Activated CD8-positive, alpha-beta T cell treated with anti-CD3 and anti-CD28 coated beads for 36 hours (primary cell): ENCODE measurements at regions of chr1 and their contacts with region 1.

Region 1: DNA sequence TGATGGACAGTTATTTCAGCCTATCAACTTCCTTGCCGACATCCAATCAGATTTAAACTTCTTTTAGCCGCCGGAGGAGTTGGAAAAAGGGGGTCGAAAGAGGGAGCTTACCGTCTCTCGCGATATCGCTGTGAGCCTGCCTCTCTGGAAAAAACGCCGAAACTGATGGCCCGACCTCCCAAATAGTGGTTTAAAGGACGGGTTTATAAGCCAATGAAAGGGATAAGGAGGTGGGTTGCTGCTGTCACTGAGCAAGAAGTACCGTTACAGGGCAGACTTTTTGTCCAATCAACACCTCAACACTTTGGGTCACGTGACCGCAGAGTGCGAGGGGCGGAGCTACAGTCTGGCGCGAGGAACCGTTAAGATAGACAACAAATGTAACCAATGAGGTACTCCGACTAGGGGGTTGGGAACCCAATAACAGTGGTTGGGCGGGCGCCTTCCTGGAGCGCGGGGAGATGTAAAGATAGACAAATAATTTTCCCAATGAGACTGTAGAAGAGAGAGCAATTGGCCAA is at the start of gene RBM15:
- DNase-seq: peak; percentile 98
- ATAC-seq: peak; percentile 80
- H3K4me3 Mint-ChIP-seq: no peak within 1 kb of the TSS
- H3K27ac Mint-ChIP-seq: no peak within 1 kb of the TSS
- H3K4me1 Mint-ChIP-seq: peaks cover 49% of the 10 kb centered on the region
- H3K27me3 Mint-ChIP-seq: no peaks in the 10 kb centered on the region
- CTCF ChIP-seq: no peak
- total RNA-seq, gene RBM15: 70.8 to 72.5 TPM

Region 2: GRCh38 chr1:110196917-110197765 is 141.8 kb before region 1 on chr1:
- CTCF ChIA-PET with region 1: interaction called, 44 read pairs
- POLR2A ChIA-PET with region 1: no interaction called
- intact Hi-C with region 1: no loop called
- DNase-seq: peak; percentile 61
- ATAC-seq: peak; percentile 100
- H3K4me3 Mint-ChIP-seq: no peak overlapping the region
- H3K27ac Mint-ChIP-seq: no peak overlapping the region
- H3K4me1 Mint-ChIP-seq: no peaks in the 10 kb centered on the region
- H3K27me3 Mint-ChIP-seq: no peaks in the 10 kb centered on the region
- CTCF ChIP-seq: peak; percentile 88

Region 3: GRCh38 chr1:110203021-110203661 is 135.8 kb before region 1 on chr1:
- CTCF ChIA-PET with region 1: interaction called, 153 read pairs
- POLR2A ChIA-PET with region 1: interaction called, 64 read pairs
- intact Hi-C with region 1: no loop called
- DNase-seq: peak; percentile 84
- ATAC-seq: peak; percentile 75
- H3K4me3 Mint-ChIP-seq: no peak overlapping the region
- H3K27ac Mint-ChIP-seq: peak overlapping the region; percentile 91
- H3K4me1 Mint-ChIP-seq: peaks cover 21% of the 10 kb centered on the region
- H3K27me3 Mint-ChIP-seq: no peaks in the 10 kb centered on the region
- CTCF ChIP-seq: peak; percentile 78

Region 4: GRCh38 chr1:110356405-110356804 is 17.5 kb after region 1 on chr1:
- CTCF ChIA-PET with region 1: no interaction called
- POLR2A ChIA-PET with region 1: interaction called, 47 read pairs
- intact Hi-C with region 1: no loop called
- DNase-seq: no peak
- ATAC-seq: no peak
- H3K4me3 Mint-ChIP-seq: no peak overlapping the region
- H3K27ac Mint-ChIP-seq: no peak overlapping the region
- H3K4me1 Mint-ChIP-seq: peaks cover 37% of the 10 kb centered on the region
- H3K27me3 Mint-ChIP-seq: no peaks in the 10 kb centered on the region
- CTCF ChIP-seq: no peak

Region 5: DNA sequence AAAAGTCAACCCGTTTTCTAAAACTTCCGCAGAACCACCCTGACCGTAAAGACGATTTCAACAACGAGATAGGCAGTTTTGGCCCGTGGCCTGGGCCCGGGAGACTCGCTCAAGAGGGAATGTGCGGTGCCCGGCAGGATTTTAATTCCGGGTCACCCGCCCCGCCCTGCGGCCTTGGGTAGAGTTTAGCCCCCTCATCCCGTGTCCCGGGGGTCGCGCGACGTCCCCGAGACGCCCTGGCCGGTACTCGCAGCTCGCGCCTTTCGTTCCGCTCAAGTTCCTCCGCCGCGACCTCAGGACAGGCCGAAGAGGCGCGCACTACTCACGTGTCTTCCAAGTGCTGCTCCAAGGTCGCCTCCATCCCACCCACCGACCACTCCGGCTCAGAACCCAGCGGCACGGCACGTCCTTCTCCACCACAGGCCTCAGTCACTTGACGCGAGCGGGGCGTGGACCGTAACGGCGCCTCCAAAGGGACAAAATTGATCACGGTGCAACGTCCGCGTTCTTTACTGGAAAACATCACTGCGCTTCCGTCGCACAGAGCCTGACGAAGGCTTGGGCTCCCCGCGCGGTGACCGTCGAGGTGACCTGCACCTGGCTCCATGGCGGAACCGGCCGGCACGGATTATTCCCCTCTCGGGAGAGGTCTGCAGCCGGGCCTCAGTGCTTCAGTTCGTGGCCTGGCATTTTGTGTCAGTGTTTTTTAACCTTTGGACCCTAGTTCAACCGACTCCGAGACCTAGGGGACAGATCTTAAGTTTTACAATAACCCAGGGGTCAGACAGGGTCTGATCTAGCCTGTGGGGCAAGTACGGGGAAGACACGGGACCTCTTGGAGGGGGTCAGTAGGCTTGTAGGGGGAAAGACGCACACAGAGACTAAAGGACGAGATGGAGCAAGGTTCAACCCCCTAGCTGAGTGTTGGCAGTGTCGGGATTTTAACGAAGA is 68.6 kb after region 1 on chr1 and contains the start of gene LAMTOR5:
- CTCF ChIA-PET with region 1: interaction called, 7 read pairs
- POLR2A ChIA-PET with region 1: interaction called, 32 read pairs
- intact Hi-C with region 1: loop called (anchors 2 kb)
- DNase-seq: peak; percentile 96
- ATAC-seq: peak; percentile 94
- H3K4me3 Mint-ChIP-seq: peak within 1 kb of the TSS; percentile 98
- H3K27ac Mint-ChIP-seq: peak within 1 kb of the TSS; percentile 100
- H3K4me1 Mint-ChIP-seq: peaks cover 19% of the 10 kb centered on the region
- H3K27me3 Mint-ChIP-seq: no peaks in the 10 kb centered on the region
- CTCF ChIP-seq: no peak
- total RNA-seq, gene LAMTOR5: 154 to 160 TPM